Left cardiac atrium (tissue), 4 donors: ENCODE measurements at regions of chr2 and their contacts with region 1.

Region 1: DNA sequence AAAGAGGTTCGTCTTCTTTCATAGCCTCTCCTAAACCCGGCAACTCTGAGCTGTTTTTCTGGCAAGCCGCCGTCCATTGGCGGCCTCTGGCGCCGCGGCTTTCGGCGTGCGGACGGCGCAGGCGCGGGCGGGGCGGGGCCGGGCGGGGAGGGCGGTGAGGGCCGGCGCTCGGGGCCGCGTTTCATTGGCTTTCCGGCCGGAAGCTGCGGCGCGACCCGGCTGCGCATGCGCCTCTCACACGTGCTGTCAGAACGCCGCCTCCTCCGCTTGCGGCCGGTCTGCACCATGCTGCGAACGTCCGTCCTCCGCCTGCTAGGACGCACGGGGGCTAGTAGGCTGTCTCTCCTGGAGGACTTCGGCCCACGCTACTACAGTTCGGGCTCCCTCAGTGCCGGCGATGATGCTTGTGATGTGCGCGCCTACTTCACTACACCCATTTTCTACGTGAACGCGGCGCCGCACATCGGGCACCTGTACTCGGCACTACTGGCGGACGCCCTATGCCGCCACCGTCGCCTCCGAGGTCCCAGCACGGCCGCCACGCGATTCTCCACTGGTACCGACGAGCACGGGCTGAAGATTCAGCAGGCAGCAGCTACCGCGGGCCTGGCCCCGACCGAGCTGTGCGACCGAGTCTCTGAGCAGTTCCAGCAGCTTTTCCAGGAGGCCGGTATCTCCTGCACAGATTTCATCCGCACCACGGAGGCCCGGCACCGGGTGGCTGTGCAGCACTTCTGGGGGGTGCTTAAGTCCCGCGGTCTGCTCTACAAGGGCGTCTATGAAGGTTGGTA is at the start of gene MARS2:
- DNase-seq: peak; percentile 96
- ATAC-seq: peak; percentile 97
- total RNA-seq, gene MARS2: 6.0 to 11.0 TPM

Region 2: DNA sequence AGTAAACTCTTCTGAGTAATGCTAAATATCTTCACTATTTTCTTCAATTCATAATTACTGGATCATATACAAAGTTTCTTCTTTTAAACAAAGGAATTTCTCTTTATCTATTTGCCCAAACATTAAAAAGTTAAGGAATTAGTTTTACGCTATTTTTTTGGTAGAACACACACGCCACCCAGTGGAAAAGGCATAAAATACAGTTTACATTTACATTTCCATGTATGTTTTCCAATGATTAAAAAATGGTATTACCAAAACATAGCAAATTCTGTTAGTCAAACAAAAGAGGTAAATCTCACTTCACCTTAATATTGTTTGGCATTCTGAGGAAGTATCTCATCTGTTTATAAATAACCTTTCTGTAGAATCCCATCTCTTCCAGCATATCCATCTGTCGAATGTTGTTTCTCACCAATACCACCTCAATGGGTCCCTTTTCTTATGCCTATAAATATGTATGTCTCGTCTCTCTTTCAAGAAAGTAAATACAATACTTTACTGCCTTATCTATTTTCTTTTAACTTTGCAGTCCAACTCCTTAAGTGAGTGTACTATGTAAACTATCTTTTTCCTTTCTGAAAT is 72.6 kb after region 1 on chr2:
- intact Hi-C with region 1: loop called in 1 of 2 experiments (anchors 10 kb)
- DNase-seq: no peak
- ATAC-seq: no peak

Region 3: GRCh38 chr2:197908990-197909776 is 203.9 kb after region 1 on chr2:
- intact Hi-C with region 1: no loop called
- DNase-seq: no peak
- ATAC-seq: peak in 1 of 2 donors; percentile 47